ENCODE measurements at regions of chr15 and their contacts with region 1.

Region 1: GRCh38 chr15:100627789-100628395 is 25.5 kb downstream of the ASB7 start:
- DNase-seq: peak; percentile 90
- H3K4me3 Mint-ChIP-seq: no peak overlapping the region
- H3K27ac Mint-ChIP-seq: no peak overlapping the region
- H3K4me1 Mint-ChIP-seq: peaks cover 11% of the 10 kb centered on the region
- H3K27me3 Mint-ChIP-seq: no peaks in the 10 kb centered on the region

Region 2: GRCh38 chr15:100602064-100602822 is 25.6 kb before region 1 on chr15 and contains the starts of genes ASB7 and LINS1:
- intact Hi-C with region 1: no loop called
- DNase-seq: peak; percentile 100
- H3K4me3 Mint-ChIP-seq: no peak within 1 kb of the TSS
- H3K27ac Mint-ChIP-seq: no peak within 1 kb of the TSS
- H3K4me1 Mint-ChIP-seq: peaks cover 54% of the 10 kb centered on the region
- H3K27me3 Mint-ChIP-seq: no peaks in the 10 kb centered on the region
- total RNA-seq, gene ASB7: 17.8 and 18.0 TPM in 2 replicates
- total RNA-seq, gene LINS1: 63.9 and 64.9 TPM in 2 replicates

Region 3: DNA sequence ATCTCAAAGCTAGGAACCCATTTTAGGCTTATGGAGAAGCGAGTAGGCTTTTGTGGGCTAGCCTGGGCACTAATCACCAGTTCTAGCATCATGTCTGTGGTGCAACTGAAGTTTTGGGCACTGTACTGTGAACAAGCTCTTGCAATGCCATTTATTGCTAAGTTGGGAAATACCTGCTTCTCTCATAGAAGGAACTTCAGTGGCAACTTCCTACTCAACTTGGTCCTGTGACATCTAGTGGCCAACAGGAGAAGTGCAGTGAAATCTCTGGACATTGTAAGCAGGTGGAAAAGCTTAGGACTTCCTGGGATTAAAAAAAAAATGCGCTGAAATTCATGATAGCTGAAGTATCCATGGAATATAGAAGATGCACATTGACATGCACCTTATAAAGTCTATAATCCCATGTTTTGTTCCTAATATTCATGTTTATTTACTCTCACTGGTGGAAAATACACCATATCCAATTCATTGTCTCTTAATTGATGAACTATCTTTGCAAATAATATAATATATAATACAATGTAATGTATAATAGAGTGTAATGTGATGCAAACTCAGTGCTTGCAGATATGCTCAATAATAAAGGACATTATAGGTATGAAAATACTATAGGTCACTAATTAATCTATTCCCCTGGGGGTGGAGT is 245.3 kb after region 1 on chr15:
- intact Hi-C with region 1: loop called (anchors 1 kb)
- DNase-seq: peak; percentile 86
- H3K4me3 Mint-ChIP-seq: no peak overlapping the region
- H3K27ac Mint-ChIP-seq: no peak overlapping the region
- H3K4me1 Mint-ChIP-seq: no peaks in the 10 kb centered on the region
- H3K27me3 Mint-ChIP-seq: peaks cover 31% of the 10 kb centered on the region

Region 4: DNA sequence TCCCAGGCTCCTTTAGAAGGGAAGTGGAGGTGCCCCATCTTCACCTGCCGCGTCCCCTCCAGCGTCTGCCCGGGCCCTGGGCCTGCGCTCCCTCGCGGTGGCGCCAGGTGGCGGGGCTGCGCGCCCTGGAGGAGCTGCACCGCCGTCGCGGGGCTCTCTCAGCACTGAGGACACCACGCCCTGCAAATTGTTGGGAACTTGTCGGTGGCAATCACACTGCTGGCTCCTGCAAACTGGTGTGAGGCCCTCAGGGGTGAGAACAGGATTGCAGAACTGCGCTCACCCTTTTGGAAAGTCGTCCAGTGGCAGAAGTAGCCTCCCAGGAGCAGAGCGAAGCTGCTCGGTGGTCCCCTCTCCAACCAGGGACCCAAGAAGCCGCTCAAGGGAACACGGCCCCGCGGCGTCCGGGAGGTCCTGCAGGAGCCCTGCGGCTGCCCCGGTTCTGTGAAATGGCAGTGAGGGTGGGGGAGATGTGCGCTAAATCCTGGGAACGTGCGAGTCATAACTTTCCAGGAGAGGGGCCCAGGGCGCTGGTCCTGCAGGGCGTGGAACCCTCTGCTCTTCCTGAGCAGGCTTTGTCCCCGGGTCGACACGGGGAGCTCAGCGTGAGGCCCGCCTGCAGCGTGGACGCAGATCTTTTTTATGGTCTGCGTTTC is 290.3 kb after region 1 on chr15:
- intact Hi-C with region 1: loop called (anchors 5 kb)
- DNase-seq: peak; percentile 92
- H3K4me3 Mint-ChIP-seq: peak overlapping the region; percentile 77
- H3K27ac Mint-ChIP-seq: no peak overlapping the region
- H3K4me1 Mint-ChIP-seq: peaks cover 20% of the 10 kb centered on the region
- H3K27me3 Mint-ChIP-seq: peaks cover 68% of the 10 kb centered on the region

Region 5: DNA sequence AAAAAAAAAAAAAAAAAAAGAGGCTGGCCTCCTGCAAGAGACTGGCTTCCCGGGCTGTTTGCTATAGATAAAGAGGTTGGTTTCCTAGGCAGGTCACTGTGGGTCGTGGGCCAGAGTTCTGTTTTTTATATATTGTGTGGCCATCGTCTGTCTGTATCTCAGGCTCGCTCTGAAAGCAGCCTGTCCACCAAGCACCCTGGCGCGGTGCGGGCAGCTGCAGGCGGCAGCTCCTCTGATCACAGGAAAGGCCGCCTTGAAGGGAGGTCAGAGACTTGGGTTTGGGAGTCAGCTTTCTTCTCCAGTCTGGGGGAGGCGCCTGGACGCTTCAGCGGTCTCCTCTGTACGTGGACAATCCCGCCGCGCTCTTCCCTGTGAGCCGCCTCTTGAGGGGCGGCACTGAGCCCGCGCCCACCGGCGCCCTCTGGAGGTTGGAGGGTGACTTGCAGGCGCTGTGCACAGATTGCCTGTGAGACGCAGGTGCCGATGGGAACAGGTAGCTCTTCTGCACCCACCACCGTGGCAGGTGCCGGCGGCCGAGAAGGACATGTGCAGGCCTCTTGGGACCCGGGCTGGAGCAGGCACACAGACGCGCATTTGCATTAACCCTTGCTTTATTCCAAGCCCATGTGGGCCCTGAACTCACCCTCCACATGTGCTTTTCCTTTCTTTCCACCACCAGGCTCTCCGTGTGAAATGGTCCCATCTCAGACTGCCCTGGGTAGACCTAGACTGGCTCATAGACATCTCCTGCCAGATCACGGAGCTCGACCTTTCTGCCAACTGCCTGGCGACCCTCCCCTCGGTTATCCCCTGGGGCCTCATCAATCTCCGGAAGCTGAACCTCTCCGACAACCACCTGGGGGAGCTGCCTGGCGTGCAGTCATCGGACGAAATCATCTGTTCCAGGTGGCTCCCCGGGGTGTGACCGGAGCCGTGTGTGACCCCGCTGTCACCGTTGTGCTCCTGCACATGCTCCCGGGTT is 380.6 kb after region 1 on chr15:
- intact Hi-C with region 1: loop called (anchors 2 kb)
- DNase-seq: peak; percentile 96
- H3K4me3 Mint-ChIP-seq: peak overlapping the region; percentile 92
- H3K27ac Mint-ChIP-seq: no peak overlapping the region
- H3K4me1 Mint-ChIP-seq: peaks cover 14% of the 10 kb centered on the region
- H3K27me3 Mint-ChIP-seq: peaks cover 17% of the 10 kb centered on the region